ENCODE measurements at regions of chr4 and their contacts with region 1.

Region 1: DNA sequence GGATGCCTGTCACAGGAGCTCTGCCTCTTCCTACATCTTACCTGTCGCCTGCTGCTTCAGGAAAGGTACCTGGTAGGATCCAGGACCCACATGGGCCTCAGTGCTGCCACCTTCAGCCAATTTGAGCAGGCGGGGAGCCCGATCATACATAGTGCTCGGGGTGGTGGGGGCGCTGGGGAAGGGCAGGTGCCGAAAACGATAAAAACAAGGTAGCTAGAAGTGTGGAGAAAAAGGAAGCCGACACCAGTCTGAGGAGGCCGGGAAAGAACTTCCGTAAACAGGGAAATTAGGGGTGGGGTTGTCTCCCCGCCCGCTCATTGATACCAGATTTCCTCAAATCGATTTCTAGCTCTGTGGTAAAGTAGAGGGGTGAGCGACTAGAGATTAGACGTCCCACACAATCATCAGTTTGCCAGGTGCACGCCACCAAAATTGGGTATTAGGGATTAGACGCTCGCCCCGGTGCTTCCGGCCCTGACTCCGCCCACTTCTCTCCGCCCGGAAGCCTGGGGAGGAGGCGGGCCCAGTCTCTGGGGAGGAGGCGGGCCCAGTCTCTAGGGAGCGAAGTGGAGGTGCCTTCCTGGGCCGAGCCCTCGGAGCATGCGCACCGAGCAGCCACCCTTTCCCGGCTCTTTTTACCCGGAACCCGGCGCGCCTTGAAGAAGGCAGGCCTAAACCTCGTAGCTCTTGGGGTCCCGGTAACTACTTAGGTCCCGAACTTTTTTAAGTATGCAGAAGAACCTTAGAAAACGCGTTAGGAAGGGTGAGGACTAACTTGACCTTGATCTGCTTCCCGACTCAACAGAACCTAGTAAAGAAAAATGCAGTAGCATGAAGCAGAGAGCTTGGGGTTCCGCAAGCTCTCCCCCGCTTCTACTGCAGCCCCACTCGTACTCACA is at the start of gene STPG2:
- H3K4me3 Mint-ChIP-seq: peak within 1 kb of the TSS; percentile 78
- H3K27ac Mint-ChIP-seq: peak within 1 kb of the TSS; percentile 92
- H3K4me1 Mint-ChIP-seq: peaks cover 11% of the 10 kb centered on the region
- H3K27me3 Mint-ChIP-seq: peaks cover 5% of the 10 kb centered on the region

Region 2: GRCh38 chr4:97819294-97819693 is 324.0 kb before region 1 on chr4:
- intact Hi-C with region 1: no loop called
- H3K4me3 Mint-ChIP-seq: no peak overlapping the region
- H3K27ac Mint-ChIP-seq: no peak overlapping the region
- H3K4me1 Mint-ChIP-seq: no peaks in the 10 kb centered on the region
- H3K27me3 Mint-ChIP-seq: no peaks in the 10 kb centered on the region

Region 3: DNA sequence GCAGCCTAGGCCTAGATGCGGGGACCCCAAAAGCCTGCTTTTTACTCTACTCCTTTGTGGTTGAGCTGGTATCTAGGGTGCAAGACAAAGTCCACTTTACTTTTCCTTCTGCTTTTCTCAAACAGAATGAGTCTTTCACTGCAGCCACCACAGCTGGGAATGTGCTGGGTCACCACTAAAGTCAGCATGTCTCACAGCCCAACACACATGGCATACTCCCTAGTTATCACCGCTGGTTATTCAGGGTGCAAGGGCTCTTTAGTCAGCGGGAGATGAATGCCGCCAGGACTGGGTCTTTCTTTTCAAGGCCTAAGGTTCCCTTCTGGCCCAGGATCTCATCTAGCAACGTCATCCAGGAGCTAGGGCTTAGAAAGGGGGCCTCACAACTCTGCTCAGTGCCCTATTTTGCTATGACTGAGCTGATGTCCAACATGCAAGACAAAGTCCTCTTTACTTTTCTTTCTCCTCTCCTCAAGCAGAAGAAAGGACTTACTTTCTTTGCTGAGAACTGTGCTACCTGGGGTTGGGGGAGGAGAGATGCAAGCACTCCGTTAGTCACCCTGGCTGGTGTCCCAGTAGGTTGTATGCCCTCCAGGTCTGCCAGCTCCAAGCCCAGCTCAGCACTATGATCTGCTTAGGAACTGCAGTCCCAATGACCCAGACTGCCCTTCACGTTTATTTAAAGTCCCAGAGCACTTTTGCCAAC is 22.9 kb after region 1 on chr4:
- intact Hi-C with region 1: no loop called
- H3K4me3 Mint-ChIP-seq: no peak overlapping the region
- H3K27ac Mint-ChIP-seq: no peak overlapping the region
- H3K4me1 Mint-ChIP-seq: no peaks in the 10 kb centered on the region
- H3K27me3 Mint-ChIP-seq: no peaks in the 10 kb centered on the region

Region 4: GRCh38 chr4:99088481-99089365 is 945.5 kb after region 1 on chr4 and contains the start of gene ADH5:
- intact Hi-C with region 1: loop called (anchors 10 kb)
- H3K4me3 Mint-ChIP-seq: peak within 1 kb of the TSS; percentile 89
- H3K27ac Mint-ChIP-seq: peak within 1 kb of the TSS; percentile 93
- H3K4me1 Mint-ChIP-seq: peaks cover 47% of the 10 kb centered on the region
- H3K27me3 Mint-ChIP-seq: peaks cover 2% of the 10 kb centered on the region